ENCODE measurements at regions of chr5 and their contacts with region 1.

Region 1: DNA sequence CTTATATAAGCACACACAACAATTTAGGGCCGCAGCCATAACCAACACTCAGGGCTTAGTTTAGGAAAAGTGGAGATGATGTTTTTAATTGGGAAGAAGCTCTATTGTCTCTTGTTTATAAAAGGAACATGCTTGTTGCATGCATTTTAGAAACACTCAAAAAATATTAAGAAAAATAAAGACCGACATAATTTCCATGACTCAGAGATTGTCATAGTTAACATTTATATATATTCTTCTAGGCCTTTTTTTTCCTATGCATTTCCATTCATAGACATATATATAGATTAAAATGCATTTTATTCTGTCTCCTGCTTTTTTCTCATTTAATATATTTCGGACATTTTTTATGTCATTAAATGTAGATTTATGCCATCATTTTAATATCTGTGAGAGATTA is 13.6 kb upstream of the ARSI start:
- DNase-seq: no peak
- ATAC-seq: no peak
- H3K4me3 ChIP-seq: no peak overlapping the region
- H3K27ac ChIP-seq: peak overlapping the region; percentile 94
- H3K4me1 ChIP-seq: peaks cover 47% of the 10 kb centered on the region
- H3K27me3 ChIP-seq: no peaks in the 10 kb centered on the region
- CTCF ChIP-seq: no peak

Region 2: DNA sequence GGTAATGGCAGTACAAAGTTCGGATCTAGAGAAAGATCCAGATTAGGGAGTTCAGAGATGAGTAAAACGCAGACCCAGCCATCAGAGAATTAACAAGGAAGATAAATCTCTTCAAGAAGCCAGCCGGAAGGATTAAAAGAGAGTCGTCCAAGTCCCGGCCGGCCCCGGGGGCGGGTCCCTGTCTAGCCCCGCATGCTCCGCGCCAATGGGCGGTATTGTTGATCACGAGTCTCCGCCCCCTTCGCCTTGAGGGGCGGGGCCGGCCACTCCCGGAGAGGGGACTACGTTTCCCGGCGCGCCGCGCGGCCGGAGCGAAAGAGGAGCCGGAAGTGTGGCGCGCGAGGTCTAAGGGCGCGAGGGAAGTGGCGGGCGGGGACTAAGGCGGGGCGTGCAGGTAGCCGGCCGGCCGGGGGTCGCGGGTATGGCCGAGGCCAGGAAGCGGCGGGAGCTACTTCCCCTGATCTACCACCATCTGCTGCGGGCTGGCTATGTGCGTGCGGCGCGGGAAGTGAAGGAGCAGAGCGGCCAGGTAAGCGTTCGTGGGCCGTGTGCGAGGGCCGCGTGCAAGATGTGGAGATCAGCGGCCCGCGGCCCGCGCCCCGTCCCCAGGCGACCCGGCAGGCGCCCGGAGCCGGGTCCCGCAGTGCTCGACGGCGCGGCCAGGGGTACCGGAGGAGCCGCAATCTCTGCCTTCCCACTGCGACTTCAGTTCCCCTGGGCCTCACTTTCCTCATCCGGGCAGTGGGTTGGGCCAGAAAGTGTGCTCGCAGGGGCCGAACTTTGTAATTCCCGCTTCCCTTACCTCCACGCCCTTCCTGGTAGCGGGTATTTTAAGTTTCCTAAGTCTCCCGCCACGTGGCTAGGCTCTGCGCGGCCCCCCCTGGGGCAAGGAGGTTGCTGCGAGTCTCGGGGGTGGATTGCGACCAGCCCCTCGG is 41.3 kb after region 1 on chr5 and contains the start of gene TCOF1:
- CTCF ChIA-PET with region 1: no interaction called
- POLR2A ChIA-PET with region 1: interaction called, 11 read pairs
- in situ Hi-C with region 1: no loop called
- intact Hi-C with region 1: no loop called
- DNase-seq: peak; percentile 76
- ATAC-seq: peak; percentile 98
- H3K4me3 ChIP-seq: peak within 1 kb of the TSS; percentile 96 to 98
- H3K27ac ChIP-seq: peak within 1 kb of the TSS; percentile 95
- H3K4me1 ChIP-seq: no peaks in the 10 kb centered on the region; the same call in 1 of the 2 replicates
- H3K27me3 ChIP-seq: no peaks in the 10 kb centered on the region
- CTCF ChIP-seq: no peak
- total RNA-seq, gene TCOF1: 92.8 TPM